A673 (cell line): ENCODE measurements at regions of chr14 and their contacts with region 1.

Region 1: GRCh38 chr14:55102141-55102621 is 26.9 kb upstream of the LGALS3 start:
- DNase-seq: peak; percentile 97
- H3K4me3 ChIP-seq: no peak overlapping the region
- H3K27ac ChIP-seq: peak overlapping the region; percentile 77
- H3K4me1 ChIP-seq: peaks cover 24% of the 10 kb centered on the region
- H3K27me3 ChIP-seq: no peaks in the 10 kb centered on the region
- CTCF ChIP-seq: no peak

Region 2: GRCh38 chr14:54881235-54881760 is 220.9 kb before region 1 on chr14:
- CTCF ChIA-PET with region 1: no interaction called
- POLR2A ChIA-PET with region 1: no interaction called
- intact Hi-C with region 1: no loop called
- DNase-seq: no peak
- H3K4me3 ChIP-seq: peak overlapping the region; percentile 21
- H3K27ac ChIP-seq: peak overlapping the region; percentile 19
- H3K4me1 ChIP-seq: no peaks in the 10 kb centered on the region
- H3K27me3 ChIP-seq: no peaks in the 10 kb centered on the region
- CTCF ChIP-seq: no peak

Region 3: DNA sequence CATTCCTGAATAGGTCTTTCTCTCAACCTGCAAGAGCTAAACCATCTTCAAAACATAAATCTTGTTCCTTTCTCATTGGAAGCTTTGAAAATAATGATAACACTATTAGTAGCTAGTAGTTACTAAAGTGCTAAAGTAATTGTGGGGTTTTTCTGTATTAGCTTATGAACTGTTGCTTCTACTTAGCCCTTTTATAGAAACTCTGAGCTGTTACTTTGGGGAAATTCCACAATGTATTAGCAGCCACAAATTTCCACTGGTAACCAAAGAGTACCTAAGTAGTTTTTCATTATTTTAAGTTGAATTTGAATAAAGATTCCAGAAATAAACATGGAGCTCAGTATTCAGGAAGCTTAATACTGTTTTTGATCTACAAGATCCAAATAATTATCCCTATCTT is 57.1 kb before region 1 on chr14:
- CTCF ChIA-PET with region 1: interaction called, 10 read pairs
- POLR2A ChIA-PET with region 1: no interaction called
- intact Hi-C with region 1: no loop called
- DNase-seq: no peak
- H3K4me3 ChIP-seq: no peak overlapping the region
- H3K27ac ChIP-seq: no peak overlapping the region
- H3K4me1 ChIP-seq: peaks cover 55% of the 10 kb centered on the region
- H3K27me3 ChIP-seq: no peaks in the 10 kb centered on the region
- CTCF ChIP-seq: no peak

Region 4: GRCh38 chr14:55062517-55063351 is 39.4 kb before region 1 on chr14:
- CTCF ChIA-PET with region 1: no interaction called
- POLR2A ChIA-PET with region 1: no interaction called
- intact Hi-C with region 1: no loop called
- DNase-seq: no peak
- H3K4me3 ChIP-seq: no peak overlapping the region
- H3K27ac ChIP-seq: no peak overlapping the region
- H3K4me1 ChIP-seq: no peaks in the 10 kb centered on the region
- H3K27me3 ChIP-seq: no peaks in the 10 kb centered on the region
- CTCF ChIP-seq: no peak

Region 5: DNA sequence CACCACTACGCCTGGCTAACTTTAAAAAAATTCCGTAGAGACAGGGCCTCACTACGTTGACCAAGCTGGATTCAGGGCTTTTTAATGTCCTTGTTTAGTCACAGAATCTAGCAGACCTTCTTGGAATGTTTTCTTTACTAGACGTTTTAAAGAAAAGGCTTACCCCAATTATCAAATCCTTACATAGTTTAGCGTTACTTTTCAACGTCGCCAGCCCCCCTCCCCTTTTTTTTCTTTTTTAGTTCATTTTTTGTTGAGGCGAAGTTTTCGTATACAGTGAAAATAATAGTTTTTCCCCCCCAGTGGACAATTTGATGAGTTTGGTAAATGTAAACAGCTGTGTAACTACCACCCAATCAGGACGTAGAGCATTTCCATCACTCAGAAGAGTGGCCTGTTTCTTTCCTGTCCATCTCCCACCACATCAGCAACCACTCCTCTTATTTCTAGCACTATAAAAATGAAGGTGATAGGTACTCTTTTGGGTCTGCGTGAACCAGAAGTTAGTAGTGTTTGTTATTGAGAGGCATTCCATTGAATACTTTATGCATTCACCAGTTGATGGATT is 90.0 kb after region 1 on chr14:
- CTCF ChIA-PET with region 1: no interaction called
- POLR2A ChIA-PET with region 1: interaction called, 11 read pairs
- intact Hi-C with region 1: no loop called
- DNase-seq: no peak
- H3K4me3 ChIP-seq: peak overlapping the region; percentile 75
- H3K27ac ChIP-seq: peak overlapping the region; percentile 83
- H3K4me1 ChIP-seq: peaks cover 17% of the 10 kb centered on the region
- H3K27me3 ChIP-seq: no peaks in the 10 kb centered on the region
- CTCF ChIP-seq: no peak

Region 6: GRCh38 chr14:55220230-55220629 is 118.0 kb after region 1 on chr14:
- CTCF ChIA-PET with region 1: no interaction called
- POLR2A ChIA-PET with region 1: no interaction called
- intact Hi-C with region 1: no loop called
- DNase-seq: no peak
- H3K4me3 ChIP-seq: no peak overlapping the region
- H3K27ac ChIP-seq: no peak overlapping the region
- H3K4me1 ChIP-seq: no peaks in the 10 kb centered on the region
- H3K27me3 ChIP-seq: no peaks in the 10 kb centered on the region
- CTCF ChIP-seq: no peak

Region 7: GRCh38 chr14:55454264-55455002 is 352.3 kb after region 1 on chr14:
- CTCF ChIA-PET with region 1: no interaction called
- POLR2A ChIA-PET with region 1: no interaction called
- intact Hi-C with region 1: no loop called
- DNase-seq: peak; percentile 98
- H3K4me3 ChIP-seq: no peak overlapping the region
- H3K27ac ChIP-seq: peak overlapping the region; percentile 72
- H3K4me1 ChIP-seq: peaks cover 27% of the 10 kb centered on the region
- H3K27me3 ChIP-seq: no peaks in the 10 kb centered on the region
- CTCF ChIP-seq: no peak